GM10248 (cell line): ENCODE measurements at regions of chr4 and their contacts with region 1.

Region 1: GRCh38 chr4:128811571-128812441 is 2.3 kb downstream of the JADE1 start:
- DNase-seq: peak; percentile 87
- CTCF ChIP-seq: no peak

Region 2: GRCh38 chr4:128227991-128228571 is 583.7 kb before region 1 on chr4:
- CTCF ChIA-PET with region 1: no interaction called
- POLR2A ChIA-PET with region 1: no interaction called
- DNase-seq: no peak
- CTCF ChIP-seq: no peak

Region 3: DNA sequence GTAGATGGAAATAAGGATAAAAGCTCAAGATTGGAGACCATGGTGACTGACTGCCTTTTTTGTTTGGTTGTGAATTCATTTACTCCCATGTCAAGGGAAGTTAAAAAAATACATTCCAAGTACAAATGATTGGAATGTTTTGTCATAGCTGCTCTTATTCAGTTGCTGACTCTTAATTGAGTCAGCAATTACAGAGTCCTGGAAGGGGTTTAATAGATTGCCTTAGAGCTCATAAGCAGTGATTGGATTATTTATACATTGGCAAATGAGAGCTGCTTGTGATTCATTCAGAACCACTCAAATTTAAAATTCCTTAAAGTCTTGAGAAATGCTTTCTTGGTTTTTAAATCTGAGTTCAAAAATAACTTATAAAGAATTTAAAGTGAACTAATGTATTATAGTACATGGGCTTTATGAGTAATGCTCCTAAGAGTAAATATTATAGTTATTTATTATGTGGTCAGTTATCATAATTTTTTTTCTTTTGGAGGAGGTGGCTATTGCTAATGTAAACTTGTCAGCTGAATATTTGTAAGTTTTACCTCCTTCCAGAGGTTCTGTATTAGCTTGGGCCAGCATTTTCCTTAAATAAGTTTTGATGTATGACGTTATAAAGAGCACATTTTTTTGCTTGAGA is 11.3 kb after region 1 on chr4:
- CTCF ChIA-PET with region 1: interaction called, 25 read pairs
- POLR2A ChIA-PET with region 1: interaction called, 8 read pairs
- DNase-seq: no peak
- CTCF ChIP-seq: no peak